ENCODE measurements at regions of chr1 and their contacts with region 1.

Region 1: DNA sequence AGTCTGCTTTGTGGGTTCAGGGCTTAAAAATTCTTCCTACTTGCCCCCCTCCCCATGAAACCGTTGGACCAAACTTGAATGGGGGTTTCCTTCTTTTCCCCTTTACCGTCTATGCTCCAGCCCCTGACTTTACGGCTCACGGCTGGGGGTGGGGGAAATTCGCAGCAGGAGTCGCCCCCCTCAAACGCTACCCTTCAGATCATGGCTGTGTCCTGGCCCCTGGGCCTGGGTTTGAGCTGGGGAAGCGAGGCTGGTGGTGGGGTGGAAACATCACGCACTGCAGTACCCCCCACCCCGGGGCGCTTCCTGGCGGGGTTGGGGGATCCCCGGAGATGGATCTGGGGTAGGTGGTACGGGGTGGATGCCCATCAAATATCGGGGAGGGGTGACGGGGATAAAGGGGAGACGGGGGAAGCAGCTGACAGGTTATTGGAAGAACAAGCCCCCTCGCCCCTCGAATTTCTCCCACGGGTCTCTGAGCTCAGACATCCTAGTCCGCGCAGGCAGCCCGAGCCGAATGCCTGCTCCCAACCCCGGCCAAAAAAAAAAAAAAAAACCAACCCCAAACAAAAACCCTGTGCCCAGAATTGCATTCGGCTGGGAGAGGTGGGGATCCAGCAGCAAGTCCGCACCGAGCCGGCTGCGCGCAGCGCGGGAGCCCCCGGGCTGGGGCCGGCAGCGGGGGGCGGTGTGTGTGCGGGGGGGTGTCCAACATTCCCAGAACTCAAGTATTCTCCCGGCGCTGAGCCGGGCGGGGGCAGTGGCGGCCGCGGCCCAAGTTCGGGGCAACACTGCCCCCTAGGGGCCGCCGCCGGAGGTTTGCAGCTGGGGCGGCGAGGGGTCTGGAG is 59.0 kb upstream of the ACOT11 start:
- DNase-seq: peak in 1 of 2 donors; percentile 92
- H3K4me3 ChIP-seq: peak overlapping the region; percentile 61 to 81
- H3K27ac ChIP-seq: peak overlapping the region; percentile 92 to 97
- H3K4me1 ChIP-seq: peaks cover 0 to 31% of the 10 kb centered on the region in 2 donors
- H3K27me3 ChIP-seq: no peaks in the 10 kb centered on the region
- CTCF ChIP-seq: peak; percentile 95 to 98 (median 96)

Region 2: DNA sequence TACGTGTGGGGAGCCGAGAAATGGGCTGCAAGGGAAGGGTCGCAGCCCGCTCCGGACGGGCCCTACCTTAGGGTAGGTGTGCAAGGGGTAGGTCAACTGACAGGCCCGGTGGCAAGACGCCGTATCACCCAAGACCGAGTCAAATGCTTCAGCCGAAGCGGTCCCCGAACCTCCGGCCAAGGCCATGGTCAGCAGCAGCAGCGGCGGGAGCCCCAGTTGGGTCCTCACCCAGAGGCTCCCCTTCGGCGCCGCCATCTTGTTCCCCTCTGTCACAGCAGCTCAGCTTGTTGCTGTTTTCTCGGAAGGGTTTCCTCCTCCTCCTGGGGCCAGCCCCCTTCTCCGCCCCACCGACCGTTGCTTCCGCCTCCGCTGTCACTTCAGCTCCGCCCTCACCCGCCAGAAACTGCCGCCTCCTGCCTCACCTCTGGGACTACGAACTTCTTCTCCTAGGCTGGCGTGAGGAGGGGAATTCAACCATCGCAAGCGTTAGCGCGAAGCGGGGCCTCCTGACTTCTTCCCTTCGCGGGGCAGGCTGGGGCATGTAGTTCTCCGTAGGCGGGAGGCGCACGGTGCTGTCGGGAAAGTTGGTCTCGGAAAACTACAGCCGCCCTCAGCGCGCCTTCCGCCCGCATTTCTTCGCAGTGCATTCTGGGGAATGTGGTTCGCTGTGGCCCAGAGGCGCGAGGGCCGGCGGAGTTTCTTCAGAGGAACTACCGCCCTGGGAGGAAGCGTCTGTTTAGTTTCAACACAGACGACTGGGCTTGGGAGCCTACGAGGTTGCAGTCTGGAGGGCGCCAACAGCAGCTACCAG is 435.9 kb before region 1 on chr1 and contains the starts of genes TCEANC2 and TMEM59:
- intact Hi-C with region 1: loop called (anchors 5 kb)
- DNase-seq: peak; percentile 95 to 99
- H3K4me3 ChIP-seq: peak within 1 kb of the TSS; percentile 91 to 94
- H3K27ac ChIP-seq: peak within 1 kb of the TSS; percentile 96 to 98
- H3K4me1 ChIP-seq: peaks cover 5 to 41% of the 10 kb centered on the region in 2 donors
- H3K27me3 ChIP-seq: no peaks in the 10 kb centered on the region
- CTCF ChIP-seq: no peak
- total RNA-seq, gene TCEANC2: 0.64 TPM
- total RNA-seq, gene TMEM59: 97.5 TPM

Region 3: DNA sequence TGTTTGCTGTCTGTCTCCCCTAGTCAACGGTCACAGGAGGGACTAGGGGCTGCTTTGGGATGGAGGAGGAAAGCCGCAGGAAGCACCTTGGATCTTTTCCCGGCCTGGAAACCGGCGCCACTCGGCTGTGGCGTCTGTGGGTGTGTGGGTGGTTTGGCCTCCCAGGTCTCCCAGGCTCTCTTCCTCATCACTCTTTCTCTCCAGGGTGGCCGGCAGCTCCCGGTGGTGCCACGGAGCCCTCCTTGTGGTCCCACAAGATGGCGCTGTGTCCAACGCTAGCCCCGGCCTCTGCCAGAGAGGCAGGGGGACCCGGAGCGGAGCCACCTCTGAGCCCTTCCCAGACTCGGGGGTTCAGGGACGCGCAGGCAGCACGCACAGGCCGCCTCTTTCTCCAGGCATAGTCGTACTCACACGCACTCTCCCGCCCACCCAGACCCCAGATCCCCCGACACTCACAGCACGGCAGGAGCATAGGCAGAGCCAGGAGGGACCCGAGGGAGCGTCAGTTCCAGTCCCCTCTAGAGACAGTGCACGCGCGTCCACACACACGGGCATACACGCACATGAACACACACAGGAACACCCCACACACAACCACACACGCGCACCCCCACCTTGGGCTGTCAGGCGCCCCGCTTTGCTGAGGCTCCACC is 367.4 kb before region 1 on chr1:
- intact Hi-C with region 1: loop called (anchors 1 kb)
- DNase-seq: peak in 1 of 2 donors; percentile 87
- H3K4me3 ChIP-seq: peak overlapping the region; percentile 25 to 60
- H3K27ac ChIP-seq: no peak overlapping the region
- H3K4me1 ChIP-seq: peaks cover 0 to 3% of the 10 kb centered on the region in 2 donors
- H3K27me3 ChIP-seq: no peaks in the 10 kb centered on the region
- CTCF ChIP-seq: peak; percentile 68 to 85 (median 81)

Region 4: GRCh38 chr1:54227091-54227602 is 261.9 kb before region 1 on chr1:
- intact Hi-C with region 1: loop called (anchors 5 kb)
- DNase-seq: peak; percentile 38 to 80
- H3K4me3 ChIP-seq: no peak overlapping the region
- H3K27ac ChIP-seq: peak overlapping the region; percentile 41 to 56
- H3K4me1 ChIP-seq: peaks cover 0 to 8% of the 10 kb centered on the region in 2 donors
- H3K27me3 ChIP-seq: no peaks in the 10 kb centered on the region
- CTCF ChIP-seq: no peak

Region 5: DNA sequence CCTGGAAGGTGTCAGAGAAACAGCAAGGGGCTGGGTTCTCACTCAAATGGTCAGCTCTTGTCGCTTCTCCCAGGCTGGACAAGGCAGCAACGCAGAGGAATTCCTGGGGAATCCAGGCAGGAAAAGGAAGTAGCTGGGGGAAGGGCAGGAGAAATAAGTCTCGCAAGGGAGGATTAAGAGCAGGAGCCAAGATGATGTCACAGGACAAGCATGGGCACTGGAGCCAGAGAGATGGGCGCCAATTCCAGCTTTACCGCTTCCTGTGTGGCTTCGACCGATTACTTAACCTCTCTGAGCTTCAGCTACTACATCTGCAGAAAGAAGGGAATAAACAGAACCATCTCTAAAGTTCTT is 153.3 kb before region 1 on chr1:
- intact Hi-C with region 1: loop called (anchors 5 kb)
- DNase-seq: peak in 1 of 2 donors; percentile 87
- H3K4me3 ChIP-seq: peak overlapping the region in 1 of 2 donors; percentile 56
- H3K27ac ChIP-seq: peak overlapping the region; percentile 89 to 91
- H3K4me1 ChIP-seq: peaks cover 15 to 48% of the 10 kb centered on the region in 2 donors
- H3K27me3 ChIP-seq: no peaks in the 10 kb centered on the region
- CTCF ChIP-seq: no peak

Region 6: DNA sequence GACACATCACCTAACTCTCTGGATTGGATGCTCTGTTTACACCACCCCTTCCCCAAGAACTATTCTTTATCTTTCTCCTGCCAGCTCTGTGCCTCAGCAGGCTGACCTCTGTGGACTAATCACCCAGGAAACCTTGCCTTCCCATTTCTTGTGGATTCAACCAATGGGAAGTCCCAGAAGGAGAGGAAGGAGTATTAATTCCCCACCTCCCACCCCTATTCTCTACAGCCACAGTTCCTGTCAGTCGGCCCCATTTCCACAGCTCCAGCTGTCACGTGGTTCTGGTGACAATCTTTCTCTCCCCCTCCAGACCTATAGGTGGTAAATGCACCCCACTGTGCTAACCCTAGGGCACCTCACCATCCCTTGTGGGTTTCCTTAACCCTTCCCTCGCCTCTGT is 36.0 kb before region 1 on chr1:
- intact Hi-C with region 1: no loop called
- DNase-seq: no peak
- H3K4me3 ChIP-seq: no peak overlapping the region
- H3K27ac ChIP-seq: no peak overlapping the region
- H3K4me1 ChIP-seq: no peaks in the 10 kb centered on the region
- H3K27me3 ChIP-seq: no peaks in the 10 kb centered on the region
- CTCF ChIP-seq: no peak

Region 7: DNA sequence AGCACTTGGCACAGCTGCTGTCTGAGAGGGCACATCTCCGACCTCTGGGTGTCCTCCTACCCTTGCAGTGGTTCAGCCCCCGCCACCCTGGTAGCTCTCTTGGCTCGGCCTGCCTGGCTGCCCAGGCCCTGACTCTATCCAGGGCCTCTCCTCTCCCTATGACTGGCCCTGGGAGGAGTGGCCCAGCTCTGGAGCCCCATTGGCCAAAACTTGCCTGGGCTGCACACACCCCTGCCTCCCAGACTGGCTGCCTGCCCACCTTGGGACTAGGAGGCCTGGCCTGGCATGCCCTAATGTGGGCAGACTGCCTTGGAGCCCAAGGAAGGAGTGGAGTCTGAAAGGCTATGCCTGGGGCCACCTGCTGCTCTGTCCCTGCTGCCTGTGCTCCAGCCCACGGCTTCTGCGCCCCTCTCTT is 92.6 kb after region 1 on chr1:
- intact Hi-C with region 1: loop called (anchors 5 kb)
- DNase-seq: peak; percentile 90 to 98
- H3K4me3 ChIP-seq: no peak overlapping the region
- H3K27ac ChIP-seq: peak overlapping the region; percentile 93 to 96
- H3K4me1 ChIP-seq: peaks cover 0 to 37% of the 10 kb centered on the region in 2 donors
- H3K27me3 ChIP-seq: no peaks in the 10 kb centered on the region
- CTCF ChIP-seq: peak in 2 of 3 experiments; percentile 6 to 35